ENCODE measurements at regions of chr16 and their contacts with region 1.

Region 1: DNA sequence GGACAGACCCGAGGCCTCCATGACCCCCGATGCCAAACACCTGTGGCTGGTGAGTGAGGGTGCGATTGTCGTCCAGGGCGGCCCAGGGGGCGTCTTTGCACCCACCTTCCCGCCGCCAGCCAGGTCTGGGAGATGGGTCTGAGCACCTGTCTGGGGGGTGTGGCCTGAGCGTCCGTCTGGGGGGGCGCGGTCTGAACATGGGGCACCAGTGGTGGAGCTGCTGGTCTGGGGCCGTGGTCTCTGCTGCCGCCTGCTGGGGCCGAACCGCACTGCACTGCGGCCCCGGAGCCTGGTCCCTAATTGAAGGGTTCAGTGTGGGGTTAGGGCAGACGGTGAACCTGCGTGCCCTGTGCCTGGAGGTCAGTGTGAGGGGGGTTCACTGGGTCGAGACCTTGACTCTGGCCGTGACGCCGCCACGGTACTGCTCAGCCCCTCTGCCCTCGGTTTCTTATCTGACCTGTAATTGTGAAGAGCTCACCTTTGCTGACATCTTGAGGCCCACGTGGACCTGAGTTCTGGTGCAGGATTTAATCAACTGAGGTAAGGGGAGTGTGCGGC is 12.6 kb upstream of the TCF25 start:
- DNase-seq: no peak
- ATAC-seq: peak; percentile 86
- H3K4me3 ChIP-seq: no peak overlapping the region
- H3K27ac ChIP-seq: no peak overlapping the region
- H3K4me1 ChIP-seq: peaks cover 22% of the 10 kb centered on the region
- H3K27me3 ChIP-seq: no peaks in the 10 kb centered on the region; a peak in 1 of 4 replicates
- CTCF ChIP-seq: peak; percentile 93 to 99 (median 98)
- EP300 ChIP-seq: no peak
- POLR2A ChIP-seq: no peak
- RAD21 ChIP-seq: peak; percentile 87

Region 2: GRCh38 chr16:89363621-89364393 is 497.0 kb before region 1 on chr16:
- CTCF ChIA-PET with region 1: no interaction called
- POLR2A ChIA-PET with region 1: no interaction called
- RAD21 ChIA-PET with region 1: no interaction called
- SMC1A ChIA-PET with region 1: no interaction called
- in situ Hi-C with region 1: no loop called
- intact Hi-C with region 1: no loop called
- DNase-seq: no peak
- ATAC-seq: no peak
- H3K4me3 ChIP-seq: no peak overlapping the region
- H3K27ac ChIP-seq: peak overlapping the region; percentile 49
- H3K4me1 ChIP-seq: peaks cover 81% of the 10 kb centered on the region
- H3K27me3 ChIP-seq: no peaks in the 10 kb centered on the region
- CTCF ChIP-seq: no peak
- EP300 ChIP-seq: no peak
- POLR2A ChIP-seq: no peak
- RAD21 ChIP-seq: no peak

Region 3: DNA sequence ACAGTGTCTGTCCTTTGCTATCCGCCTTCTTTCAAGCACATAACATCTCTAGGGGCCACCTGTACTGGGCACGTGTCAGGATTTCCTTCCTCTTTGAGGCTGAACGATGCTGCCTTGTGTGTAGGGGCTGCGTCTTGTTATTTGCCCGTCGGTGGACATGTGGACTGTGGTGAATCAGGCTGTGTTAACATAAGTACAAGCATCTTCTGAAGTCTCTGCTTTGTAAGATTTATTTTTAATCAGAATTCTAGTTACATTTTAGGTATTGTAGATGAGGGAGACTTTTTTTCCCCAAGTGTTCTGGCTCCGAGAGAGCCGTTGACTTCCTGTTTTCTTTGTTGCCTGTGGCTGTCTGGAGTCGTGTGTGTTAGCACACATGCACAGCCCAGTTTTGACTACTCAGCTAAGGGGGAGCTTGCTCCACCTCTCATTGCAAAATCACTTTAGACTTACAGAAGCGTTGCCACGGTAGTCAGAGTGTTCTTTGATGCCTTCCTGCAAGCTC is 326.5 kb before region 1 on chr16:
- CTCF ChIA-PET with region 1: no interaction called
- POLR2A ChIA-PET with region 1: no interaction called
- RAD21 ChIA-PET with region 1: no interaction called
- SMC1A ChIA-PET with region 1: no interaction called
- in situ Hi-C with region 1: no loop called
- intact Hi-C with region 1: no loop called
- DNase-seq: no peak
- ATAC-seq: no peak
- H3K4me3 ChIP-seq: no peak overlapping the region
- H3K27ac ChIP-seq: no peak overlapping the region
- H3K4me1 ChIP-seq: no peaks in the 10 kb centered on the region; the same call in 1 of the 2 replicates
- H3K27me3 ChIP-seq: no peaks in the 10 kb centered on the region
- CTCF ChIP-seq: no peak
- EP300 ChIP-seq: no peak
- POLR2A ChIP-seq: no peak
- RAD21 ChIP-seq: no peak

Region 4: DNA sequence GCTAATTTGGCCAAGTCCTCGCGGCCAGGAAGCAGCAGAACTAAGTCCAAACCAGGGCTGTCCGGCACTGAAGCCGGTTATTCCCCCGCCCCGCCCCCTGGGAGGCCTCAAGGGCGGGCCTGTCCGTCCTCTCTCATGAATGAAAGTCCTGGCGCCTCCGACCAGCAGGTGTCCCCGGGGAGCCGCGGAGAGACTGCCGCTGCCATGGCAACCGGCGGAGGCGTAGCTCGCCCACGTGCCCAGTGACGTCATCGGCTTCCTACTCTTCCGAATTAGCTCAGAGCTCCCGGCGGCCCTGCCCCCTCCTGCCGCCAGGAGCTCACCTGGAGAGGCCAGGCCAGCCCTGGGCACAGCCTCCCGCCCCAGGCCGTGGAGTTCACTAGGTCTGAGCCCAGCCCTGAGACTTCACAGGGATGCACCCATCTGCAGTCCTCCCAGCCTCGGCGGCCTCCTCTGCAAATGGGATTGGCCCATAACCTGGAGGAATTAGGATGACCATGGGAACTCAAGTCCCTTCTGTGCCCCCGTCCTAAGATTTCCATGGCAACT is 160.7 kb before region 1 on chr16:
- CTCF ChIA-PET with region 1: interaction called, 119 read pairs
- POLR2A ChIA-PET with region 1: interaction called, 9 read pairs
- RAD21 ChIA-PET with region 1: interaction called, 26 read pairs
- SMC1A ChIA-PET with region 1: interaction called, 44 read pairs
- in situ Hi-C with region 1: loop called (anchors 5 kb)
- intact Hi-C with region 1: loop called (anchors 1 kb)
- DNase-seq: peak; percentile 82
- ATAC-seq: peak; percentile 67
- H3K4me3 ChIP-seq: peak overlapping the region; percentile 83
- H3K27ac ChIP-seq: no peak overlapping the region; the same call in 1 of the 2 replicates
- H3K4me1 ChIP-seq: peaks cover 22% of the 10 kb centered on the region
- H3K27me3 ChIP-seq: no peaks in the 10 kb centered on the region
- CTCF ChIP-seq: peak; percentile 68 to 94 (median 71)
- EP300 ChIP-seq: peak; percentile 55 to 63; a peak in 2 of 4 replicates
- POLR2A ChIP-seq: no peak; the same call in none of the 2 replicates
- RAD21 ChIP-seq: peak; percentile 55

Region 5: GRCh38 chr16:89749647-89750046 is 111.2 kb before region 1 on chr16:
- CTCF ChIA-PET with region 1: interaction called, 23 read pairs
- POLR2A ChIA-PET with region 1: no interaction called
- RAD21 ChIA-PET with region 1: no interaction called
- SMC1A ChIA-PET with region 1: interaction called, 5 read pairs
- in situ Hi-C with region 1: no loop called
- intact Hi-C with region 1: no loop called
- DNase-seq: no peak
- ATAC-seq: no peak; the same call in 1 of the 3 replicates
- H3K4me3 ChIP-seq: no peak overlapping the region
- H3K27ac ChIP-seq: no peak overlapping the region
- H3K4me1 ChIP-seq: no peaks in the 10 kb centered on the region; the same call in 1 of the 2 replicates
- H3K27me3 ChIP-seq: no peaks in the 10 kb centered on the region
- CTCF ChIP-seq: no peak
- EP300 ChIP-seq: no peak
- POLR2A ChIP-seq: no peak
- RAD21 ChIP-seq: no peak

Region 6: DNA sequence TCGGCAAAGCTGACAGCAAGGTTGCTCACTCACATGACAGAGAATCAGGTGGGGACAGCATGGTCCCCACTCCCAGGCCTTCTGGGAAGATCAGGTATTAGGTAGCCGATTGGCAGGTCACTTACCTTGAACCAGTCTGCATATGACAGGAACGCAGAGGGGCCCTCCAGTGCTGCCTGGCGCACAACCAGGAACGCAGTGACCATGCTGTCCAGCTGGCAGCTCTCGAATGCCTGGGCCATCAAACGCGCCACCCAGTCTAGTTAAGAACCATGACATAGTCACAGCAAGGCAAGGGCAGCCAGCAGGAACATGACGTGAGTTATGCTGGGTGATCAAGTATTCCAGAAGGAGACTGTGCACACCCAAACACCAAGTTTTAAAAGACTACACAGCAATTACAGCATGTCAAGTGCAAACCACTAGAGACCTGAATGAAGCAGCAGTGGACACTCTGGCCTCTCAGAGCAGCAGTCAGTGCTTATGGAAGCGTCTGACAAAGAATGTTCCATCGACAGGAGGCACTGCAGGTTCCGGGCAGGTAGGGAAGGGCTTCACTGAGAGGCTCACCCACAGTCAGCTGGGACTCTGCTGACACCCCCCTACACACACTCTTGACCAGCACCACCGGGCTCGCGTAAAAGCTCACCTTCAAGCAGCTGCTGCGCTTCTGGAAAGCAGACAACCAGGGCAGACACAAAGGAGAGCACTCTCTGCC is 69.4 kb before region 1 on chr16:
- CTCF ChIA-PET with region 1: interaction called, 22 read pairs
- POLR2A ChIA-PET with region 1: no interaction called
- RAD21 ChIA-PET with region 1: interaction called, 17 read pairs
- SMC1A ChIA-PET with region 1: interaction called, 16 read pairs
- in situ Hi-C with region 1: no loop called
- intact Hi-C with region 1: loop called (anchors 1 kb)
- DNase-seq: no peak
- ATAC-seq: no peak
- H3K4me3 ChIP-seq: no peak overlapping the region
- H3K27ac ChIP-seq: no peak overlapping the region
- H3K4me1 ChIP-seq: no peaks in the 10 kb centered on the region
- H3K27me3 ChIP-seq: no peaks in the 10 kb centered on the region
- CTCF ChIP-seq: no peak
- EP300 ChIP-seq: no peak
- POLR2A ChIP-seq: no peak
- RAD21 ChIP-seq: no peak

Region 7: GRCh38 chr16:89873972-89874689 is 13.3 kb after region 1 on chr16:
- CTCF ChIA-PET with region 1: interaction called, 19 read pairs
- POLR2A ChIA-PET with region 1: interaction called, 49 read pairs
- RAD21 ChIA-PET with region 1: interaction called, 14 read pairs
- SMC1A ChIA-PET with region 1: interaction called, 17 read pairs
- in situ Hi-C with region 1: no loop called
- intact Hi-C with region 1: no loop called
- DNase-seq: peak; percentile 81
- ATAC-seq: peak; percentile 79
- H3K4me3 ChIP-seq: peak overlapping the region; percentile 99
- H3K27ac ChIP-seq: peak overlapping the region; percentile 100
- H3K4me1 ChIP-seq: peaks cover 15% of the 10 kb centered on the region
- H3K27me3 ChIP-seq: no peaks in the 10 kb centered on the region
- CTCF ChIP-seq: no peak
- EP300 ChIP-seq: no peak
- POLR2A ChIP-seq: peak; percentile 5
- RAD21 ChIP-seq: no peak

Measured in GM12878 (cell line).